Ovary (tissue), 10 donors: ENCODE measurements at regions of chr10 and their contacts with region 1.

Region 1: GRCh38 chr10:44310762-44311562 is 73.9 kb downstream of the CXCL12 start:
- DNase-seq: peak; percentile 79 to 93 (median 88)
- H3K4me3 ChIP-seq: peak overlapping the region; percentile 15
- H3K27ac ChIP-seq: no peak overlapping the region
- H3K4me1 ChIP-seq: peaks cover 6% of the 10 kb centered on the region
- H3K27me3 ChIP-seq: no peaks in the 10 kb centered on the region
- CTCF ChIP-seq: peak; percentile 92 to 95 (median 94)
- EP300 ChIP-seq: no peak
- POLR2A ChIP-seq: no peak

Region 2: DNA sequence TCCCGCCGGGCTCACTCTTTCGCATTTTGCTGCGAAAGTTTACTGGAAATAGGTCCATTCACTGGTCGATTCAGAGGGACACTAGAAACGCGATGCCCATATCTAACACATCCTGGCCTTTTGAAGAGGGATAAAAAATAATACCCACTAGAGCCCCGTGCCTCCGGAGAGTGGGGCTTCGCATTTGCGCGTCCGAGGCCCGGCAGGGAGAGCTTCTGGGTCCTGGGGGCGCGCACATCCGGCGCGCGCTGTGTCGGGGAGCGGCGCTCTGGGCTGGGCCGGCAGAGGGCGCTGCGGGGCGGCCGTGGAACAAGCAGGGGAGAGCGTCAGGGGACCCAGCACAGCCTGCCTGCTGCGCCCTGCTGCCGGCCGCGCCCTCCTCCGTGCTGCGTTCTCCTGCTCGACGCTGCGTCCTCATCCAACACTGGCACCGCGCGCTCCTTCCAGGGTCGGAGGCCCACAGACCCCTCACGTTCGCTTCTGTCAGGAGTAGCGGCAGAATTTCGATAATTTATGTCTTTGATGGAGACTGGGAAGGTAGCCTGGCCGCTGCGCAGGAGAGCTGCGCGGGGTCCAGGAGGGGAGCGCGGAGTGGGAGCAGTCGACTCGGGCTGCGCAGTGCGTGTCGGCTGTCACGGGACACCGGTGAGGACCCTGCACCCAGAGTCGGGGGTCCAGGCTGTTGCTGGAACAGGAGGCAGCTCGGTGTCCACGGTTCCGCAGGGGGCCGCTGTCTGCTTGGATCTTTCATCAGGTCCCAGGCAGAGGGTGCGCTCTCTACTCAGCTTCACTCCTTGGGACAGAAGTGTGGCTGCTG is 620.8 kb before region 1 on chr10:
- intact Hi-C with region 1: loop called in 3 of 4 experiments (anchors 2 to 10 kb)
- DNase-seq: peak; percentile 79 to 94 (median 90)
- H3K4me3 ChIP-seq: peak overlapping the region; percentile 41
- H3K27ac ChIP-seq: peak overlapping the region; percentile 48 to 51
- H3K4me1 ChIP-seq: peaks cover 10% of the 10 kb centered on the region
- H3K27me3 ChIP-seq: no peaks in the 10 kb centered on the region
- CTCF ChIP-seq: peak; percentile 88 to 91 (median 91)
- EP300 ChIP-seq: no peak
- POLR2A ChIP-seq: peak; percentile 25

Region 3: DNA sequence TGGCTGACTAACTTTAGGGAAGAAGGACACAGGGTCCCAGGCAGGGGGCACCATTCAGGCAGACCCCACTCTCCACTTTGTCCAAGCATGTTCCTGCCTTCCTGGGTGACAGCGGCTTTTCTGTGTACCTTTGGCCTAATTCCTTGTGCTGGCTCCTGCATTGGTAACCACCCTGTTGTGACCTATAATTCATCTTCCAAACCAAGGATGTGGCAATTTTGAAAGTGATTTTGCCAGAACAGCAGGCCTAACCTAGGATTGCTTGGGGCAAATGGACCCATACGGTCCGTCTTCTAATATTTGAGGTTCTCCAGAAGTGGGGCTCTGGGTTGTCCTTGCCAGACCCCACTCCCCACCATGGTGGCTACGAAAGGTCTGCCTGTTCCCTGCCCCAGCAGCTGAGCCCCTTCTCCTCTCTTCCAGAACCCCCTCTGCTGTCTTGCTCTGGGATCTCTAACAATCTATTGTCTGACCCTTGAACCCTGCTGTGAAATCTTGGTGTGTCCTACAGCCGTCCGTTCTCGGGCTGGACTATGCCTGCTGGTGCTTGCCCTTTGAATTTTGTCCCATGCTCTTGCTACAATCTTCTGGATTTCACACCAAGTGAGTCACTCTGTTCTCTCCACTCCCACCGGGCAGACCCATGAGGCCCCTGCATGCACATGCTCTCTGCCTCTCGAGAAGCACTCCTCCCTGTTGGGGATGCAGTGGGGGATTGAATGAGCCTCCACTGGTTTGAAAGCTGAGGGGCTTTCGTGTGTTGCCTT is 242.1 kb before region 1 on chr10:
- intact Hi-C with region 1: loop called in 1 of 4 experiments (anchors 10 kb)
- DNase-seq: no peak
- H3K4me3 ChIP-seq: no peak overlapping the region
- H3K27ac ChIP-seq: no peak overlapping the region
- H3K4me1 ChIP-seq: peaks cover 16% of the 10 kb centered on the region
- H3K27me3 ChIP-seq: no peaks in the 10 kb centered on the region
- CTCF ChIP-seq: no peak
- EP300 ChIP-seq: no peak
- POLR2A ChIP-seq: no peak

Region 4: GRCh38 chr10:44857363-44858016 is 546.5 kb after region 1 on chr10:
- intact Hi-C with region 1: loop called in 2 of 4 experiments (anchors 10 kb)
- DNase-seq: peak; percentile 62 to 86 (median 84)
- H3K4me3 ChIP-seq: no peak overlapping the region
- H3K27ac ChIP-seq: peak overlapping the region in 1 of 2 donors; percentile 16
- H3K4me1 ChIP-seq: peaks cover 2% of the 10 kb centered on the region
- H3K27me3 ChIP-seq: no peaks in the 10 kb centered on the region
- CTCF ChIP-seq: peak; percentile 89 to 98 (median 91)
- EP300 ChIP-seq: no peak
- POLR2A ChIP-seq: no peak

Region 5: DNA sequence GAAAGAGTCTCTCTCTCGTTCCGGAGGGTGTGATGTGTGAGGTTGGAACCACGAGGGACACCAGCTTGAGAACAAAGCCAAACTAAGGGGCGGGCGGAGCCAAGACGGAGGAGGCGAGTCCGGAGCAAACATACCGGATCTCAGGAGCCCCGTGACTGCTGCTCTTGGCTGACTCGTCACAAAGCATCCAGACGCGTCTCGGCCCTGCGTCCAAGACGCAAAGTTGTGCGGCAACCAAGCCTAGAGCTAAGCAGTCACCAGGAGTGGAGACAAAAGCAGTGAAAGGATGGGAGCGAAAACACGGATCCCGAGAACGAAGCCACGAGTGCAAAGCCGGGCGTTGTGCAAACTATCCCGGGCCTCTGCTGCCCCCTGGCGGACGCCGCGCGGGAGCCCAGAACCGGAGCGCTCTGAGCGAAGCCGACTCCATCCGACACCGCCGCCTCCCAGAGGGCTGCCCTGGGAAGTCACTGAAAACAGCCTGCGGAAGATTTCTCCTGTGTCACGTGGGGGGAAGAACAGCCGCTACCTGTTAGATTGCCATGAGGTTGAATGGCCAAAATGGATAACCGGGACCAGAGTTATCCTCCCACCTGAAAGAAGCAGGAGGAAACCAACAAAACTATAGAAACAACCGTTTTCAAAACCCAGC is 553.8 kb after region 1 on chr10:
- intact Hi-C with region 1: loop called in 2 of 4 experiments (anchors 10 kb)
- DNase-seq: peak; percentile 88 to 96 (median 95)
- H3K4me3 ChIP-seq: peak overlapping the region; percentile 37
- H3K27ac ChIP-seq: peak overlapping the region in 1 of 2 donors; percentile 76
- H3K4me1 ChIP-seq: peaks cover 3% of the 10 kb centered on the region
- H3K27me3 ChIP-seq: no peaks in the 10 kb centered on the region
- CTCF ChIP-seq: peak; percentile 94 to 97 (median 97)
- EP300 ChIP-seq: no peak
- POLR2A ChIP-seq: no peak